Activated T-helper 1 cell treated with anti-CD3 and anti-CD28 coated beads, Interleukin-12 subunit alpha, Interleukin-12 subunit beta, Interleukin-2, Interleukin-4 antibody, amounts not matched to agents 30 ng/mL and 10 ng/mL and 1 ng/mL, durations not matched to agents 14 hours and 24 hours and 36 hours (primary cell): ENCODE measurements at regions of chr11 and their contacts with region 1.

Region 1: DNA sequence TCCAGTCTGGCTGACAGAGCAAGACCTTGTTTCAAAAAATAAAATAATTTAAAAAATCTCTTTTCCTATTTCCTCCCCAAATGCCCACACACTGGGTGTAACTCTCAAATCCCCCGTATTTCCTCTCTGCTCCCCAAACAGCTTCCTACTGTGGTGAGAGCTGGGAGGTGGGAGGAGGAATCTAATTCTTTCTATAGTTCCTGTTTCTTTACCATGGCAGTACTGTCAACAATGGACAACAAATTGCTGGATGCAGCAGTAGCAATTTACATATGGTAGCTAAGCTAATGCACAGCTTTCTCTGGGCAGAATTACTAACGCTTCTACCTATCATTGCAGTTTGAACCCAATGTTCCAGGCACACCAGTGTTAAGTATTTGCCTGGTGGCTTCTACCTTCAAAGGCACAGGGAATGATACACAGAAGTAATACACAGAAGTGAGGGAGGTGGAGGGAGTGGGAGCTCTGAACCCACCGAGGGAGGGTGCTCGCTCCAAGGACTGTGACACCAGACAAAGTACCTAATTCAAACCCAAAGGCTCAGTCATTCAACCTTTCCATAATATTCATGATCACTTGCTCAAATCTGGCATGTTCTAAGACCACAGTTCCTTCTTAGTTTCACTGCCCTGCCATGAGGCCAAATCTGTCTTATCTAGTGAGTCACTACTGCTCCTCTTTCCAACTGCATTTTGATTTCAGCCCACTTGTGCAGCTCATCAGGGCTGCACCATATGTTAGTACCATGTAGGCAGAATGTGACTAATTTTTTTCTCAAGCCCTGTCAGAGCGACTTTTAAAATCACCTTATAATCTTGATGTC is 37.9 kb downstream of the CELF1 start:
- DNase-seq: no peak
- H3K4me3 Mint-ChIP-seq: peak overlapping the region; percentile 60
- H3K27ac Mint-ChIP-seq: peak overlapping the region; percentile 93
- H3K4me1 Mint-ChIP-seq: peaks cover 76% of the 10 kb centered on the region
- H3K27me3 Mint-ChIP-seq: no peaks in the 10 kb centered on the region

Region 2: GRCh38 chr11:47616726-47617416 is 101.8 kb after region 1 on chr11:
- intact Hi-C with region 1: loop called (anchors 1 kb)
- DNase-seq: no peak
- H3K4me3 Mint-ChIP-seq: no peak overlapping the region
- H3K27ac Mint-ChIP-seq: no peak overlapping the region
- H3K4me1 Mint-ChIP-seq: peaks cover 11% of the 10 kb centered on the region
- H3K27me3 Mint-ChIP-seq: no peaks in the 10 kb centered on the region